Thyroid gland (tissue), 4 donors: ENCODE measurements at regions of chr5 and their contacts with region 1.

Region 1: GRCh38 chr5:131436081-131436480 is 172.2 kb downstream of the CDC42SE2 start:
- DNase-seq: peak in 1 of 2 donors; percentile 33
- H3K4me3 ChIP-seq: no peak overlapping the region
- H3K27ac ChIP-seq: no peak overlapping the region
- H3K4me1 ChIP-seq: no peaks in the 10 kb centered on the region
- H3K27me3 ChIP-seq: no peaks in the 10 kb centered on the region
- CTCF ChIP-seq: no peak
- POLR2A ChIP-seq: no peak

Region 2: DNA sequence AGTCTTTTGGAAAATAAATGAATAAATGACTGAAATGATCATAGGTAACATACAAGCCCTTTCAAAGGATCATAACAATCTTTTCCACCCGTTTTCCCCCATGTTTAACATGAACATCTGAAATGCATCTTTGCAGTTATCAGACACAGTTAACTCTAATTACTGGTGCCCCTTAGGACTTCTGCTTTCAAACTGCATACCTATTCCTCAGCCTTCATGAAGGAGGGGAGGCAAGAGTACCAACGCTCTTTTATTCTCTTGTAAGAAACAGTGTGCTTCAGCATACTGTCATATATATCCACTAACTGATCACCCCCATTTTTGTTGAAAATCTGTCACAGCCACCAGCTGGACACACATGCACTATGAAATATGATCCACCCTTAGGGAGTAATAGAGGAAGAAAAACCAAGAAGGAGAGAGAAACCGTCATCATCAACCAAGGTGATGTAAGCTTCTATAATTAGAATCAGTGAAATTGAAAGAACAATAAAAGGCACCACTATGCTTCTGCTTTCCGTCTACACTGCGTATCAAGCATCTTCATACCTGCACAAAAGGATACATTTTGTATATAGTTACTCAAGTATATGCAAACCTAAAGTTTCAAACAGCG is 100.2 kb after region 1 on chr5:
- intact Hi-C with region 1: no loop called
- DNase-seq: no peak
- H3K4me3 ChIP-seq: no peak overlapping the region
- H3K27ac ChIP-seq: no peak overlapping the region
- H3K4me1 ChIP-seq: peaks cover 0 to 16% of the 10 kb centered on the region in 2 donors
- H3K27me3 ChIP-seq: no peaks in the 10 kb centered on the region
- CTCF ChIP-seq: no peak
- POLR2A ChIP-seq: no peak

Region 3: DNA sequence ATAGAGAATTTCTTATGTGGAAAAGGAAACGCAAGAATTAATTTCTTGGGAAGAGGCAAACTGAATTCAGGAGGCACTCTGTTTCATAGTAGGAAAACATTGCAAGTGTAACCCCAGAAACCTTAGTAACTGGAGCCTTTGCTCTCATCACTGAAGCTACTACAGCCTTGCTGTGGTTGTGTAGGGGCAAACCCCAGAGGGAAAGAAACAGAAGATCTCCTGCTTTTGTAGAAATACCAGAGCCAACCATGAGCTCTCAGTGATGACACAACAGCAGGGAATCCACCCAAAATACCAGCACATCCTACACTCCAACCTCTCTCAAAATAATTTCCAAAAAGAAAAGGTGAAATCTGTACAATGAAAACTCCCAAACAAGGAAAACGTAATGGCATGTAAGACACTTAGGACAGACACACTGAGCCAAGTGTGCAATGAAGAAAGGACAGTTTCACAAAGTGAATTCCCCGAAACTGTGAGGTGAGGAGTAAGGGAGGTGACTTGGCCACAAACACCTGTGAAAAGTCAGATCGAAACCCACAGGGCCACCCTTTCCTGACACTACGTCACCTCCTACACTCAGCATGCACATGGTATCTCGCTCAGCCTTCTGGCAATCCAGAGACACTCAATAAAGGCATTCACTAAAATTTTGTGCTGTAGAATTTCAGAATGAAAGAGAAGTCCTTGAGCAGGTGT is 583.9 kb after region 1 on chr5:
- intact Hi-C with region 1: loop called (anchors 5 kb)
- DNase-seq: no peak
- H3K4me3 ChIP-seq: no peak overlapping the region
- H3K27ac ChIP-seq: no peak overlapping the region
- H3K4me1 ChIP-seq: no peaks in the 10 kb centered on the region
- H3K27me3 ChIP-seq: no peaks in the 10 kb centered on the region
- CTCF ChIP-seq: no peak
- POLR2A ChIP-seq: no peak